GM10248 (cell line): ENCODE measurements at regions of chr15 and their contacts with region 1.

Region 1: DNA sequence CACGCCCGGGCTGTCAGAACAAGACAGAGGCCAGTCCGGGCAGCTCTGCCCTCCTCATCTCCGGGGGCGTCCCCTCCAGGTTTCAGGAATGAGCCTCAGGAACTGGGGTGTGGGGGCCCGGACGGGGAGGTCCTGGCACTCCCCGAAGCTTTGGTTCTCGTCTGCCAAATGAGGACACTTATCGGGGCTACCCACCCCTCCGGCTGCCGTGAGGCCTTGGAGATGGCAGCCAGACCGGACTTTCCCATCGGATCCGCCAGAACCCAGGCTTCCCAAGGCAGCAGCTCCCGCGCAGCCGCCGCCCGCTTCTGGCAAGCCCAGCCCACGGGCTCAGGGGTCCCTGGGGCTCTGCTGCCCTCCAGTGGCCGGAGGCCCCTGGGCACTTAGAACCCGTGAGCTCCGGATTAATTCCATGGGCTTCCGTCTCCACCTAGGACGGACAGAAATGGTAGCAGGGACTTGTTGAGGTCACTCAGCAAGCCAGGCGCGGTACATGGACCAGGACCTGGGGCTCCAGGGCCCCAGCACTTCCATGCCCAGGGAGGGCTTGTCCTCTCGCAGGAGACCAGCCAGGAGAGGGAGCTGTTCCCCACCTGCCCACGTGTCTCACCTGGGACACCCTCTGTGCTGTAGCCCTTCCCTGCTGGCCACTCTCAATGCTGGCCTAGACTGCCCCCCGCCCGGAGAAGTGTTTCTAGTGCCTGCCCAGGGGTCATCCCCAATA is 89.4 kb downstream of the LINGO1 start:
- DNase-seq: peak; percentile 90
- CTCF ChIP-seq: peak; percentile 92

Region 2: GRCh38 chr15:77034695-77035489 is 508.4 kb before region 1 on chr15:
- CTCF ChIA-PET with region 1: interaction called, 25 read pairs
- POLR2A ChIA-PET with region 1: no interaction called
- DNase-seq: no peak
- CTCF ChIP-seq: peak; percentile 69

Region 3: DNA sequence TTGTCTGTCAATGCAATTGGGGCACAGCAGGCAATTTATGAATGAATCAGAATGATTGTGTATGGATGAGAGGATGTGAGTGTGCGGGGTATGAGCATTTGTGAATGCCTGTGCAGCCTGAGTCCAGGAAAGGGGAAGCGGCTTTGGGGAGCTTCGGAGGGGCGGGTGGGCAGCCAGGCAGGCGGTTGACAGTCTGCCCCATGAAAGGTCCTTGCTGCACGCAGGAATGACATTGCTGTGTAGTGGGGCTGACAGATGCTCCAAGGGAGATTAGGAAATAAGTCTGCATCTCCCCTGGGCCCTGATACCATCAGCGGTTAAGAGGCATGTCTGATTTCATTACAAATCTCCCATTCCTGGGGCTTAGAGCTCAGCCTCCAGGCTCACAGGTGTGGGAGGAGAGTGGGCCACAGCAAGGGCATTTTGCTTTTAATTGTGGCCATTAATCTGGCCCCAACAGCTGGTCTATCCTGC is 446.0 kb before region 1 on chr15:
- CTCF ChIA-PET with region 1: interaction called, 143 read pairs
- POLR2A ChIA-PET with region 1: no interaction called
- DNase-seq: no peak
- CTCF ChIP-seq: no peak

Region 4: DNA sequence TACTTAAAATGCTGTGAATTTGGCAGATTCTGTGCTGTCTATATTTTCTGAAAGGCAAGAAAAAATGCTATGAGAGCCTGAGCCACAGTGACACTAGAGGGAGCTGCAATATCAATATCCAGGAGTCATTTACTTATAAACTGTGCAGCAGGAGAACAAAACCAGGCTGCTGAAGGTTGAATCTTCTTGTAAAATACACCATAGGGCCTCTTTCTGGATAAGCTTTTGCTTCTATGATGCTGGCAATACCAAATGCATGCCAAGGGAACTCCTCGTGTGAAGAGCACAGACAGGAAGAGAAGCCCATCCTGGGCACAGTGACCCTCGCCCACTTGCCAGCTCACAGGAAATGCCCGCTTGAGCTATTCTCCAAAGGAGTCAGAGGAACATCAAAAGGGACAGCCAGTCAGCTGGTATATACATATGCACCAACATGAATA is 424.4 kb before region 1 on chr15:
- CTCF ChIA-PET with region 1: interaction called, 102 read pairs
- POLR2A ChIA-PET with region 1: no interaction called
- DNase-seq: peak; percentile 60
- CTCF ChIP-seq: peak; percentile 81

Region 5: DNA sequence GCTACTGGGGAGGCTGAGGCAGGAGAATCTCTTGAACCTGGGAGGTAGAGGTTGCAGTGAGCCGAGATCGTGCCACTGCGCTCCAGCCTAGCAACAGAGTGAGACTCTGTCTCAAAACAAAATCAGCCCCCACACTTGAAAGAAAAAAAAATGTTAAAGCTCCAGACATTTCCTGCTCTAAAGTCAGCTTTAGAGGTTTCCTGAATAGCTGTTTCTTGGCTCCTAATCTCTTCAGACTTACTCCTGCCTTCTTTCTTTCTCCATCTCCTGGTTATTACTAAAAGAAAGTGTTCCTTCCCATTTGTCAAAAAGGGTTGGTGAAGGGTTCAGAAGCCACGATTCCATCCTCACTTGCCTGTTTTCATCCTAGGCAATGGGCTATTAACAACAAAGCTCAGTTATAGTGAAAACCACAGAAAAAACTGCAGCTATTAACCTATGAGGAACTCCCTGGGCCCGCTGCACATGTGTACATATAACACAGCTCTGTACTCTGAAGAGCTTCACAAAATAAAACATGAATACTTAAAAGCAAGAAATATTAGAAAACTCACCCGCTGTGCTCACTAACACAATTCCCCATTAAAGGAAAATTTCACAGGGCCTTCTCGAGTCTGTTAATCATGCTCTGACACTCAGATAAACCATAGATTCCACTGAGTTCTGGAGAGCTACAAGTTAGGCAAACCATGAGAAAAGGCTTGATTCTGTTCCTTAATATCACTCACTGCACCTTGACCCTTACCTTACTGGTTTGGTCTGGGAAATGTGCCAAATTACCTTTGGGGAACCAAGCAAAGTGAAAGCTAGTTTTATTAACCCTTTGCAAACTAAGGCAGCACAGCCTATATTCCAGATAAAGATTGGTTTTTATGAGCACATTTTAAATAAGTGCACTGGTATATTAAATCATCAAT is 382.5 kb before region 1 on chr15:
- CTCF ChIA-PET with region 1: interaction called, 10 read pairs
- POLR2A ChIA-PET with region 1: no interaction called
- DNase-seq: no peak
- CTCF ChIP-seq: no peak

Region 6: GRCh38 chr15:77224352-77224751 is 319.0 kb before region 1 on chr15:
- CTCF ChIA-PET with region 1: no interaction called
- POLR2A ChIA-PET with region 1: no interaction called
- DNase-seq: no peak
- CTCF ChIP-seq: no peak

Region 7: GRCh38 chr15:77502379-77503095 is 40.8 kb before region 1 on chr15:
- CTCF ChIA-PET with region 1: interaction called, 48 read pairs
- POLR2A ChIA-PET with region 1: no interaction called
- DNase-seq: no peak
- CTCF ChIP-seq: no peak

Region 8: DNA sequence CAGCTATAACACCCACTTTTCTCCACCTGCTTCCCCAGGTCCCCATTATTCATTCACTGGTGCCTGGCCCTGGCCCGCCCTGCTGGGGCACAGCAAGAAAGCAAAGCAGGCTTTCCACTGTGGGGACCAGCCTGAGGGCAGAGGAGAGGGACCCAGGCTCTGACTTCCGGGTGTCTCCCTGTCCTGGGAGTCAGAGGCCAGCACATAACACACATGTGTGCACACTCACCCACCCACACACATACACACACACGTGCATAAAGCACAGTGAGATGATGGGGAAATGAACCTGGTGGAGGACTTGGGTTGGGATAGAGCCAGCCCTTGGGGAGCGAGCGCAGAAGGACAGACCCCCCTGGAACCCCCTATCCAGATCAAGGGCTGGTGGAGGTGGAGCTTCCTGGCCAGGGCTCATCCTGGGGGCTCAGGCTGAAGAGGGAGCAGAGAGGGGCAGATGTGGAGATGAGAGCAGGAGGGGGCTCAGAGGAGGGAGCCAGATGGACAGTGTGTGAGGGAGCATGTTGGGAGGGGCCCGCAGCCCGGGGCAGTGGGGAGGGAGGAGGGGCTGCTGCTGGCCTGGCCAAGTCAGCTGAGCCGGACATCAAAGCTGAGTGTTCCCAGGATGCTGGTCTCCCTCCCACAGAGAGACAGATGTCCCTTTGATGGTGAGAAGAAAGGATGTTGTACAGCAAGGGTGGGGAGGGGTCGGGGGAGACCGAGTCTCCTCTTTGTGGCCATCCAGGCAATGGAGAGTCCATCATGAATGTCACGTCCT is 11.2 kb after region 1 on chr15:
- CTCF ChIA-PET with region 1: interaction called, 28 read pairs
- POLR2A ChIA-PET with region 1: no interaction called
- DNase-seq: no peak
- CTCF ChIP-seq: no peak